ENCODE measurements at regions of chr1 and their contacts with region 1.

Region 1: GRCh38 chr1:171588230-171588629 is 33.8 kb upstream of the MYOCOS start:
- DNase-seq: no peak
- H3K4me3 ChIP-seq: no peak overlapping the region
- H3K27ac ChIP-seq: no peak overlapping the region
- H3K4me1 ChIP-seq: no peaks in the 10 kb centered on the region
- H3K27me3 ChIP-seq: no peaks in the 10 kb centered on the region
- CTCF ChIP-seq: no peak
- POLR2A ChIP-seq: no peak

Region 2: GRCh38 chr1:171403371-171403770 is 184.9 kb before region 1 on chr1:
- CTCF ChIA-PET with region 1: no interaction called
- POLR2A ChIA-PET with region 1: no interaction called
- dilution Hi-C with region 1: no loop called
- intact Hi-C with region 1: no loop called
- DNase-seq: no peak
- H3K4me3 ChIP-seq: no peak overlapping the region
- H3K27ac ChIP-seq: no peak overlapping the region
- H3K4me1 ChIP-seq: no peaks in the 10 kb centered on the region
- H3K27me3 ChIP-seq: no peaks in the 10 kb centered on the region
- CTCF ChIP-seq: no peak
- POLR2A ChIP-seq: no peak

Region 3: DNA sequence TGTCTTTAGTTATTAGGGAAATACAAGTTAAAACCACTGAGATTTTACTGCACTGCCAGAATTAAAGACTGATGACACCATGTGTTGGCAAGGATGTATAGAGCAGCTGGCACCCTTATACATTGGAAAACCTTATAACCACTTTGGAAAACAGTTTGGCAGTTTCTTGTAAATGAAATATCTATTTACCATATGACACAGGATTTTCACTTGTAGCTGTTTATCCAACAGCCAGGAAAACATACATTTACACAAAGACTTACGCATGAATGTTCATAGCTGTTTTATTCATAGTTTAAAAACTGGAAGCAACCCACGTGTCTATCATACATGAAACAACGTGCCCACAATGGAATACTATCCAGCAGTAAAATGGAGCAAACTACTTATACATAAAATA is 57.6 kb before region 1 on chr1:
- CTCF ChIA-PET with region 1: no interaction called
- POLR2A ChIA-PET with region 1: no interaction called
- dilution Hi-C with region 1: no loop called
- intact Hi-C with region 1: loop called (anchors 5 kb)
- DNase-seq: no peak
- H3K4me3 ChIP-seq: no peak overlapping the region
- H3K27ac ChIP-seq: no peak overlapping the region
- H3K4me1 ChIP-seq: no peaks in the 10 kb centered on the region
- H3K27me3 ChIP-seq: no peaks in the 10 kb centered on the region
- CTCF ChIP-seq: no peak
- POLR2A ChIP-seq: no peak

Region 4: GRCh38 chr1:171636141-171636540 is 47.9 kb after region 1 on chr1:
- CTCF ChIA-PET with region 1: no interaction called
- POLR2A ChIA-PET with region 1: no interaction called
- dilution Hi-C with region 1: no loop called
- intact Hi-C with region 1: no loop called
- DNase-seq: no peak
- H3K4me3 ChIP-seq: no peak overlapping the region
- H3K27ac ChIP-seq: no peak overlapping the region
- H3K4me1 ChIP-seq: no peaks in the 10 kb centered on the region
- H3K27me3 ChIP-seq: no peaks in the 10 kb centered on the region
- CTCF ChIP-seq: no peak
- POLR2A ChIP-seq: no peak

Region 5: GRCh38 chr1:171769171-171769570 is 180.9 kb after region 1 on chr1:
- CTCF ChIA-PET with region 1: no interaction called
- POLR2A ChIA-PET with region 1: no interaction called
- dilution Hi-C with region 1: no loop called
- intact Hi-C with region 1: no loop called
- DNase-seq: no peak
- H3K4me3 ChIP-seq: no peak overlapping the region
- H3K27ac ChIP-seq: no peak overlapping the region
- H3K4me1 ChIP-seq: peaks cover 3% of the 10 kb centered on the region
- H3K27me3 ChIP-seq: peaks cover 2 to 8% of the 10 kb centered on the region in 2 experiments
- CTCF ChIP-seq: no peak
- POLR2A ChIP-seq: no peak

Measured in endothelial cell of umbilical vein (primary cell).